Left cardiac atrium (tissue), 4 donors: ENCODE measurements at regions of chr14 and their contacts with region 1.

Region 1: DNA sequence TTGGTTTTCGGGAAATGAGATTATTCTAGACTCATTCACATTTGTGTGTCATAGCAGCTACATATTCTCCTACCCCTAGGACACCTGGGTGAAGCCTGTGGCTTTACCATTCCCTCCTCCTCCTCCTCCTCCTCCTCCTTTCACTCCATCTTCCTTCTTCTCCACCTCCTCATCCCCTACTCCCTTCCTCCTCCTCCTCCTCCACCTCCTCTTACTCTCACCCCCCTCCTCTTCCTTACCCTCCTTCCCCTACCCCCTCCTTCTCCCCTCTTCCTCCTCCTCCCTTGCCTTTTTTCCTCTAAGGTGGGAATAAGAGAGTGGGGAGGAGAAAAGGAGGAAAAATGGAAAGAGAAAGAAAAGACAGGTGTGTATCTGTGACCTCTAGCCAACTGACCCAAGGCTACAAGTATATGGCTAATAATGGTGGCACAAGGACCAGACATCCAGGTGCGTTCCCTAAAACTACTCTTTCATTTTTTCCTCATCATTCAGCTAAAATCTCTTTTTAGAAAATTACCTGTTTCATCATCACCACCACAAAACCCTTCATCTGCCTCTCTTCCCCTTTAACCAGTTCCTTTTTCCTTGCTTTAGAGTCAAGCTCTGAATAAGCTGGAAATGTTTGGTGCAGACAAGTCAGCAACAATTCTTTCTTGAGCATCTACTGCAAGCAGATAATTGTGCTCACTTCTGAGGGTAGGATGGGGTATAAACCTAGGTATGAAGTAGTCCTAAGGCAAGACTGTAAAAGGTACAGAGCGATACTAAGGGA is 149.8 kb upstream of the FOXN3 start:
- DNase-seq: no peak
- ATAC-seq: no peak

Region 2: GRCh38 chr14:89600950-89601826 is 34.4 kb after region 1 on chr14:
- intact Hi-C with region 1: loop called in 1 of 2 experiments (anchors 5 kb)
- DNase-seq: no peak
- ATAC-seq: peak; percentile 55 to 72